ENCODE measurements at regions of chr6 and their contacts with region 1.

Region 1: DNA sequence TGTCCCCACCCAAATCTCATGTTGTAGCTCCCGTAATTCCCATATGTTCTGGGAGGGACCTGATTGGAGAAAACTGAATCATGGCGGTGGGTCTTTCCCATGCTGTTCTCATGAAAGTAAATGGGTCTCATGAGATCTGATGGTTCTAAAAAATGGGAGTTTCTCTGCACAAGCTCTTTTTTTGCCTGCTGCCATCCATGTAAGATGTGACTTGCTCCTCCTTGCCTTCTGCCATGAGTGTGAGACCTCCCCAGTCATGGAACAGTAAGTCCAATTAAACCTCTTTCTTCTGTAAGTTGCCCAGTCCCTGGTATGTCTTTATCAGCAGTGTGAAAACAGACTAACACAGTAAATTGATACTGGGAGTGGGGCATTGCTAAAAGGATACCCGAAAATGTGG is 1218.4 kb upstream of the CITED2 start:
- DNase-seq: no peak
- ATAC-seq: no peak

Region 2: GRCh38 chr6:140548398-140548797 is 44.5 kb before region 1 on chr6:
- intact Hi-C with region 1: loop called (anchors 2 kb)
- DNase-seq: no peak
- ATAC-seq: no peak